IMR-90 (cell line): ENCODE measurements at regions of chr6 and their contacts with region 1.

Region 1: DNA sequence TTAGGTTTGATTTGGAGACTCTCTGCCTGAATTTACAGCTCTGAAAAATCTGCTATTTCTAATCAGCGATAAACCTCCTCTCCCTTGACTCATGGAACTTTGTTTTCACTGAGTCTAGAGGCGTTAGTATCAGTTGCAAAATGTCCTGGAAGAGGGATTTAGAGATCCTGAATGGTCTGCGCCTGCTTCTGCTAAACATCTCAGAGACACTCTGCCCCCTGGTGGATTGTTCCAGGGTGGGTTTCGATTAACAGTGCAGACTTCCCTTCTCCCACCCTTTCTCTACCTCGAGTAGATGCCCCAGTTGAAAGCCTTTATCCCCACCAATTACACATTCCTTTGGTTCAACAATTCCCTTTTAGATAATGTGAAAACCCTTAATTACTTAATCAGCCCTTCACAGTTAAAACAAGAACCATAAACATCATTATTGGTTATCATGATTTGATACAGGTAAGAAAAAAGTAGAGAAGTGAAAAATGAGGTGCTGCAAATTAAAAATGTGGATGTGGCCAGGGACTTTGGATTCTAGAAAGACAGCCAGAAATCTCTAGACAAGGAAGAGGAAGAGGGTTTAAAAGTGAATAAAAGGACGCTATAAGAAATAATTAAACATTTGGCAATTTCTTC is 5.5 kb downstream of the HTR1B start:
- DNase-seq: peak; percentile 97
- ATAC-seq: peak; percentile 69
- H3K4me3 ChIP-seq: no peak overlapping the region
- H3K27ac ChIP-seq: no peak overlapping the region
- H3K4me1 ChIP-seq: peaks cover 7% of the 10 kb centered on the region
- H3K27me3 ChIP-seq: peaks cover 5% of the 10 kb centered on the region; the same call in 1 of the 2 replicates
- CTCF ChIP-seq: peak; percentile 84
- POLR2A ChIP-seq: 0 out of 2 replicates have a peak, but pooled peaks have one; percentile 31
- RAD21 ChIP-seq: peak; percentile 93

Region 2: DNA sequence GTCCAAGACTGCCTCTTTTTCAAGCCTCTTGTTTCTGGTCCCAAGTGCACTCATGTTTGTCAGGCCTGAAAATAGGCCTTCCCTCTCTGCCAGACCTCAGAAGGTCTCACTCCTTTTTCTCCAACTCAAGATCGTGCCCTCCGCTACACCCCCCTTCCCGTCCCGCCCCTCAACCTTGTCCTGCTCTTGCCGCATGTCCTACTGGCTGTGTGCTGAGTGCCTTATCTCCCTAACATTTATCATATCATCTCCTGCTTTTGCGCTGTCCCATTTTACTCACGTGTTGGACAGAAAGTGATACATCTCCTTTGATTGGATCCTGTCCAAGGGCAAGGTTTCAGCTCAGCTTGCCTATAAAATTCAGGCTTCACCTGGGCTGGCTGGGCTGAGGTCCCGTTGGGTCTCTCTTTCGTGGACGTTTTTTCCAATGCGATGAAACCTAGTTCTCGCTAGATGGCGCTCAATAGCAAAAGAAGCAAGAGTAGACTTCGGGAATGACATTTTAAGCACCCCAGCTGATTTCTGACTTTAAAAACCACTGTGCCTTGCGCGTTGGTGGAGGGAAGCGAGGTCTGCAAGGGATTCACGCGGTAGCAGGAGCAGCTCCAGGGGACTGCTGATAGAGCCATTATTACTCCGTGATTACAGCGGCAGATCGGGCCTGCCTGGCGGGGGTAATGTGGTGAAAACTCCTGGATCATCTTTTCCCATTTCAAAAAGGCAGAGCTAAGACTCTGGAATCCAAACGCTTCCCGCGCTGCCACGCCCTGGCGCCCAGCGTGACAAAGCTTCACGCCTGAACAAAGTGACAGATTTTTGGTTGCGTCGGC is 1523.0 kb before region 1 on chr6:
- CTCF ChIA-PET with region 1: interaction called, 5 read pairs
- POLR2A ChIA-PET with region 1: no interaction called
- dilution Hi-C with region 1: no loop called
- in situ Hi-C with region 1: loop called (anchors 10 kb)
- intact Hi-C with region 1: loop called (anchors 1 kb)
- DNase-seq: peak; percentile 79
- ATAC-seq: peak; percentile 84
- H3K4me3 ChIP-seq: peak overlapping the region; percentile 42
- H3K27ac ChIP-seq: no peak overlapping the region
- H3K4me1 ChIP-seq: peaks cover 2% of the 10 kb centered on the region
- H3K27me3 ChIP-seq: peaks cover 11% of the 10 kb centered on the region; the same call in 1 of the 2 replicates
- CTCF ChIP-seq: peak; percentile 81
- POLR2A ChIP-seq: no peak
- RAD21 ChIP-seq: peak; percentile 75

Region 3: GRCh38 chr6:76697585-76697984 is 760.2 kb before region 1 on chr6:
- CTCF ChIA-PET with region 1: interaction called, 3 read pairs
- POLR2A ChIA-PET with region 1: no interaction called
- dilution Hi-C with region 1: no loop called
- in situ Hi-C with region 1: no loop called
- intact Hi-C with region 1: loop called (anchors 1 kb)
- DNase-seq: peak; percentile 18
- ATAC-seq: peak; percentile 35; the same call in 1 of the 2 replicates
- H3K4me3 ChIP-seq: no peak overlapping the region
- H3K27ac ChIP-seq: no peak overlapping the region
- H3K4me1 ChIP-seq: no peaks in the 10 kb centered on the region
- H3K27me3 ChIP-seq: no peaks in the 10 kb centered on the region
- CTCF ChIP-seq: peak; percentile 39
- POLR2A ChIP-seq: no peak
- RAD21 ChIP-seq: peak; percentile 48

Region 4: DNA sequence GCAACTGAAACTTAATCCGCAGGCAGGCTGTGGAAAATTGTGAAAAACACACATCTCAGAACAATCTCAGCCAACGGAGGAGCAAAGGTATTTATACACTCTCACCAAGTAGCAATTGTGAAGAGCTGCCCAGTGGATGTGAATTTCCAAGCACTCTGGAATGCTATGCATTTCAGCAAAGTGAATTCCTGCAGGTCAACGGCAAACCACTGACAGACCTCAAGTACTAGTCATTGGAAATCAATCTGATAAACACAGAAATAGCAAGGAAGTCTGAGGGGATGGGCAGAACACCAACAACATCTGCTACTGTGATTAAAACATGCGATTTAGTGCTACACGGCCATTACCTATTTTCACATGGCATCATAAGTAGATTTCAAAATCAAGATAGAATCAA is 423.7 kb before region 1 on chr6:
- CTCF ChIA-PET with region 1: no interaction called
- POLR2A ChIA-PET with region 1: no interaction called
- dilution Hi-C with region 1: no loop called
- in situ Hi-C with region 1: no loop called
- intact Hi-C with region 1: loop called (anchors 2 kb)
- DNase-seq: peak; percentile 96
- ATAC-seq: peak; percentile 89
- H3K4me3 ChIP-seq: peak overlapping the region; percentile 18; the same call in 1 of the 2 replicates
- H3K27ac ChIP-seq: peak overlapping the region; percentile 15; the same call in 1 of the 2 replicates
- H3K4me1 ChIP-seq: peaks cover 6% of the 10 kb centered on the region
- H3K27me3 ChIP-seq: no peaks in the 10 kb centered on the region
- CTCF ChIP-seq: no peak
- POLR2A ChIP-seq: no peak
- RAD21 ChIP-seq: no peak

Region 5: DNA sequence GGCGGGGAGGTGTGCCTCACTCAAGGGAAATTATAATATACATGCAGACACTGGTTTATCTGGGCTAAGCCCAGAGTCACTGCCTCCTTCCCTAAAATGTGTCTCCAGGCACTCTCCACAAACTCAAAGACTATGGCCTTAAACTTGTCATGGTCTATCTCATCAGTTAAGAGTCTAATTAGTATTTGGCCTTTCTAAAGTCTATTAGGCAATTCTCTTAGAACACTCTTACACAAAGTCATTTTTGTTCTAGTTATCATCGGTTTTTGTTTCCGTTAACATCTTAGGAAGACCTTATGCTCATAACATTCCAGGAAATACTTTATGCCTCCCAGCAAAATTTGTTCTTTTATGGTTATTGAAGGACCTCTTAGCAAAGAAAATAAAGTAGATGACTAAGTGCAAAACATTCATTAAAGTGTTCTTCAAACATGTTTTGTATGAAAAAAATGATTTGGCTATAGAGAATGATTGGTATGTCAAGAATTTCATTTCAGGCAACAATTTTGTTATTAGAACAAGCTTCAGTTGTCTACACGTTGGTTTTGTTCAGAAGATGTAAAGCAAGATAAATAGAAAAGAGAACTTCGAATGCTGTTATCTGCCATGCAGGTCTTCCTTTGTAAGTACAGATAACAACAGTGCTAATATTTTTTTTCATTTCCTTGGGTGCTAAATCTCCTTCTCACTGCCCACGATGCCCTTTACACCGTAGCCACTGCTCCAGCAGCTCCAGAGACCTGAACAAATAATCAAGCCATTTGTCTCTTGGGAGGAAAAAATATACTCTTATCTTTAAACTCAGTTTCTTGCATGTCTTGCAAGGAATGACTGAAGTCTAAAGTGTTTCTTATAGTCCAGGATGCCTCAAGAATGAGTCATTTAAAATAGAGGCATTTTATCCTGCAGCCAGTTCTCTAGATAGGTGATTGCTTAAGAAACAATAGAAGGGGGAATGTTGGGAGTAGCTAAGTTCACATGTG is 165.0 kb before region 1 on chr6:
- CTCF ChIA-PET with region 1: no interaction called
- POLR2A ChIA-PET with region 1: no interaction called
- dilution Hi-C with region 1: no loop called
- in situ Hi-C with region 1: no loop called
- intact Hi-C with region 1: loop called (anchors 1 kb)
- DNase-seq: peak; percentile 80
- ATAC-seq: peak; percentile 82
- H3K4me3 ChIP-seq: no peak overlapping the region
- H3K27ac ChIP-seq: peak overlapping the region; percentile 76
- H3K4me1 ChIP-seq: peaks cover 3% of the 10 kb centered on the region
- H3K27me3 ChIP-seq: no peaks in the 10 kb centered on the region
- CTCF ChIP-seq: no peak
- POLR2A ChIP-seq: no peak
- RAD21 ChIP-seq: no peak

Region 6: DNA sequence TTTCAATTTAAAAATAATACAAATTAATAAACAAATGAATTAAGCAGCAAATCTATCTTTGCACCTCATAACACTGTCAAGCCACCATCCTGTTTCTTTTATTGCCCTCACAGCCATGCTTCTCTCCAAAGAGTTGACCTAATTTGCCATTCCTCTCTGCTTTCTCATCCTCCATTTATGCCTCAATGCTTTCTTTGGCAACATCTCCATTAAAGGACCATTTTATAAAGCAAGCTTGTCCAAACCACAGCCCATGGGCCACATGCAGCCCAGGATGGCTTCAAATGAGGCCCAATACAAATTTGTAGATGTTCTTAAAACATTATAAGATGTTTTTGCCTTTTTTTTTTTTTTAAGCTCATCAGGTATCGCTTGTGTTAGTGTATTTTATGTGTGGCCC is 168.6 kb after region 1 on chr6:
- CTCF ChIA-PET with region 1: no interaction called
- POLR2A ChIA-PET with region 1: no interaction called
- dilution Hi-C with region 1: no loop called
- in situ Hi-C with region 1: no loop called
- intact Hi-C with region 1: no loop called
- DNase-seq: no peak
- ATAC-seq: no peak
- H3K4me3 ChIP-seq: no peak overlapping the region
- H3K27ac ChIP-seq: no peak overlapping the region
- H3K4me1 ChIP-seq: no peaks in the 10 kb centered on the region
- H3K27me3 ChIP-seq: no peaks in the 10 kb centered on the region
- CTCF ChIP-seq: no peak
- POLR2A ChIP-seq: no peak
- RAD21 ChIP-seq: no peak